Activated naive CD4-positive, alpha-beta T cell treated with anti-CD3 and anti-CD28 coated beads for 36 hours (primary cell): ENCODE measurements at regions of chr12 and their contacts with region 1.

Region 1: GRCh38 chr12:108664338-108665258 is 30.9 kb upstream of the SELPLG start:
- DNase-seq: peak; percentile 95
- H3K4me3 Mint-ChIP-seq: peak overlapping the region; percentile 41
- H3K27ac Mint-ChIP-seq: peak overlapping the region; percentile 74
- H3K4me1 Mint-ChIP-seq: peaks cover 30% of the 10 kb centered on the region
- H3K27me3 Mint-ChIP-seq: no peaks in the 10 kb centered on the region

Region 2: DNA sequence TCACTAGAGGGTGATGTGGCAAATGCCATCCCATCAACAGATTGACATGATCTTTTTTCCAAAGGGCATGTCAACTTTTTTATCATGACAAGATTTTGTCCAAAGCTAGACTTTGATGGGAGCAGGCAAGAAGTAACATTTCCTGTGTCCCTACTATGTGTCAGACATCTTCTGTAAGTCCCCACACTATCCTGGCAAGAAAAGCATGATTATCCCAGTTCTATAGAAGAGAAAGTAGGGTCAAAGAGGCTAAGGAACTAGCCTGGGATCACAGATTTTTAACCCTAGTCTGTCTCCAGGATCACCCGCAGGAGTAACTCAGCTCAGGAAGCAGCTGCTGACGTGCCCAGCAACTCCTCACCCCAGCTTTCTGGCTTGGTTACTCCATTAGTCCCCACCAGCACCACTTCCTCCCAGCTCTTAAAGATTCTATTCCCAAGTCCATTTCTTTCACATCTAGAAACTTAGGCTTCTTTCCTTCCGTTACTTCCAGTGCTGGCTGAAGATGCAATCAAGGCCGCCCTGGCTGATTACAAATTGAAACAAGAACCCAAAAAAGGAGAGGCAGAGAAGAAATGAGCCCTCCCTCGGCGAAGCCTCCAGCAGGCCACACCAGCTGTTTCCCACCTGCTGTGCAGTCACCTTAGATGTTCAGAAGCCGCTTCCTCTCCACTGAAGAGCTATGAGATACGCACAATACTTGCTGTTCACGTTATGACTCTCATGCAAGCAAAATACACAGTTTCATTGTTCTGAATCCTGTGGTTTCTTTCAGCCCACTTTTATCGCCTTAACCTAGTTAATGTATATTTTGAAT is 96.1 kb before region 1 on chr12:
- CTCF ChIA-PET with region 1: interaction called, 5 read pairs
- intact Hi-C with region 1: loop called (anchors 1 kb)
- DNase-seq: peak; percentile 89
- H3K4me3 Mint-ChIP-seq: peak overlapping the region; percentile 30
- H3K27ac Mint-ChIP-seq: peak overlapping the region; percentile 91
- H3K4me1 Mint-ChIP-seq: peaks cover 90% of the 10 kb centered on the region
- H3K27me3 Mint-ChIP-seq: no peaks in the 10 kb centered on the region

Region 3: GRCh38 chr12:108597559-108598471 is 66.8 kb before region 1 on chr12 and contains the start of gene TMEM119:
- CTCF ChIA-PET with region 1: no interaction called
- intact Hi-C with region 1: no loop called
- DNase-seq: no peak
- H3K4me3 Mint-ChIP-seq: no peak within 1 kb of the TSS
- H3K27ac Mint-ChIP-seq: no peak within 1 kb of the TSS
- H3K4me1 Mint-ChIP-seq: no peaks in the 10 kb centered on the region
- H3K27me3 Mint-ChIP-seq: no peaks in the 10 kb centered on the region
- total RNA-seq, gene TMEM119: not detected

Region 4: GRCh38 chr12:108653082-108653516 is 11.5 kb before region 1 on chr12:
- CTCF ChIA-PET with region 1: interaction called, 22 read pairs
- intact Hi-C with region 1: no loop called
- DNase-seq: no peak
- H3K4me3 Mint-ChIP-seq: no peak overlapping the region
- H3K27ac Mint-ChIP-seq: no peak overlapping the region
- H3K4me1 Mint-ChIP-seq: peaks cover 26% of the 10 kb centered on the region
- H3K27me3 Mint-ChIP-seq: no peaks in the 10 kb centered on the region

Region 5: DNA sequence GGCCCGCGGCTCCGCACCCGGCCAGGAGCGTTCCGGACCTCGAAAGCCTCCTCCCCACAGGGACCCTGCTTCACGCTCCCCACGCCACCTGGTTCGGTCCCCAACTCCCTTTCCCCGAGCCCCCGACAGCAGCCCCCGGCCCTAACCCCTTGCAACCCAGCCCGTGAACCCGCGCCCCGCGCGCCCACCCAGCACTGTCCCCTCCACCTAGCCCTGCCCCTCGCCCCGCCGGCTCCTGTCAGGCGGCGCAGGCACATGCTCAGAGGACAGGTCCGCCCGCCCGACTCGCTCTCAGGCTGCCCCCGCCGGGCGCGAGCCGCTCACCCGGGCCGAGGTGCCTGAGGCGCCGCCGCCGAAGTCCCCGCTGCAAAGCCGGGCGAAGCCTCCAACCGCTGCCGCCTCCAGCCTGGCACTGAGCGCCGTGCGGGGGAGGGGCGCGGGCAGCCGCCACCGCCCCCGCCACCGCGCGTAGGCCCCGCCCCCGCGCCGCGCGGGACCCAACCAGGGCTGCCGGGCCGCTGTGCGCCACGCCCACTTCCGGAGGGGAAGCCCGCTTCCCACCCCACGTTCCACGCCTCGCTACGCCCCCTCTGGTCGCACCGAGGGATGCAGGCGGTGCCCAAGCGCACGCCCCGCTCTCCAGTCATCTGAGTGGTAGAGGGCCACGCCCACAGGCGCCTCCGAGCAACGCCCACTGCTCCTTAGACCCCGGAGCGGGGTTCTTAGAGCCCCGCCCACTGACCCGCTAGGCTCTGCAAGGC is 66.7 kb after region 1 on chr12 and contains the start of gene CORO1C:
- CTCF ChIA-PET with region 1: interaction called, 10 read pairs
- intact Hi-C with region 1: loop called (anchors 1 kb)
- DNase-seq: peak; percentile 96
- H3K4me3 Mint-ChIP-seq: peak within 1 kb of the TSS; percentile 89
- H3K27ac Mint-ChIP-seq: peak within 1 kb of the TSS; percentile 87
- H3K4me1 Mint-ChIP-seq: peaks cover 29% of the 10 kb centered on the region
- H3K27me3 Mint-ChIP-seq: no peaks in the 10 kb centered on the region
- total RNA-seq, gene CORO1C: 36.4 to 43.7 TPM

Region 6: DNA sequence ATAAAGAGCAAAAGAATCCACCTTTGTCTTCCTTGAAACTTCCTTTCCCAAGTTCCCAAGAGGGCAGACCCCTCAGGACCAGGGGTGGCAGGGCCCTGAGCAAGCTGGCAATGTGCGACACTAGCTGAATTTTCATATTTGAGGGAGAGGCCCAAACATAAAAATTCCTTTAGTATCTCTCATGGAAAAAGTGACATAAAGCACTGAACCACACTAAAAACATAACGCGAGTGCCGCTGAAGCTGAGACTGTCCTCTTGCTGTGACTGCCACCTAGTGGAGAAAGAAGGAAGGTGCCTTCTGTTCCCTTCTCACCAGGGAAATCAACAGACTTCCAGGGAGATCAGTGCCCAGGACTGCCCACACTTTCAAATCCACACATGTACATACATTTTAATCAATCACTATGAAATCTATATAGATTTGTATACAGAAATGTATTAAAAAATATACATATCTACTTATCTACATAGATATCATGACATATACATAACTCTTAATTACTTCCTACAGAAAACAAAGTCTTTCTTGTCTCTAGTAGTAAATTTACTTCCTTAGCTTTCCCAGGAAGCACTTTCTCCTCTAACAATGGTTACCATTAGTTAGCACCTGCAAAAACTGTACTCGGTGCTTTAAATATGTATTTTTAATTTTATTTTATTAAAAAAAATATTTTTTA is 139.0 kb after region 1 on chr12:
- CTCF ChIA-PET with region 1: interaction called, 157 read pairs
- intact Hi-C with region 1: loop called (anchors 1 kb)
- DNase-seq: peak; percentile 83
- H3K4me3 Mint-ChIP-seq: no peak overlapping the region
- H3K27ac Mint-ChIP-seq: peak overlapping the region; percentile 76
- H3K4me1 Mint-ChIP-seq: peaks cover 7% of the 10 kb centered on the region
- H3K27me3 Mint-ChIP-seq: no peaks in the 10 kb centered on the region

Region 7: GRCh38 chr12:108950991-108951739 is 286.6 kb after region 1 on chr12:
- CTCF ChIA-PET with region 1: interaction called, 24 read pairs
- intact Hi-C with region 1: loop called (anchors 1 kb)
- DNase-seq: peak; percentile 82
- H3K4me3 Mint-ChIP-seq: no peak overlapping the region
- H3K27ac Mint-ChIP-seq: no peak overlapping the region
- H3K4me1 Mint-ChIP-seq: no peaks in the 10 kb centered on the region
- H3K27me3 Mint-ChIP-seq: no peaks in the 10 kb centered on the region